ENCODE measurements at regions of chr7 and their contacts with region 1.

Region 1: GRCh38 chr7:56051339-56052191 is at the starts of genes CCT6A and PSPH:
- DNase-seq: peak; percentile 89 to 98
- ATAC-seq: peak; percentile 94 to 95
- H3K4me3 ChIP-seq: peak within 1 kb of the TSS; percentile 96
- H3K27ac ChIP-seq: peak within 1 kb of the TSS; percentile 98
- H3K4me1 ChIP-seq: peaks cover 58% of the 10 kb centered on the region
- CTCF ChIP-seq: no peak
- EP300 ChIP-seq: no peak
- POLR2A ChIP-seq: peak; percentile 96
- RAD21 ChIP-seq: no peak
- polyA plus RNA-seq, gene CCT6A: 444 and 520 TPM in 2 replicates
- polyA plus RNA-seq, gene PSPH: 52.7 and 60.9 TPM in 2 replicates

Region 2: DNA sequence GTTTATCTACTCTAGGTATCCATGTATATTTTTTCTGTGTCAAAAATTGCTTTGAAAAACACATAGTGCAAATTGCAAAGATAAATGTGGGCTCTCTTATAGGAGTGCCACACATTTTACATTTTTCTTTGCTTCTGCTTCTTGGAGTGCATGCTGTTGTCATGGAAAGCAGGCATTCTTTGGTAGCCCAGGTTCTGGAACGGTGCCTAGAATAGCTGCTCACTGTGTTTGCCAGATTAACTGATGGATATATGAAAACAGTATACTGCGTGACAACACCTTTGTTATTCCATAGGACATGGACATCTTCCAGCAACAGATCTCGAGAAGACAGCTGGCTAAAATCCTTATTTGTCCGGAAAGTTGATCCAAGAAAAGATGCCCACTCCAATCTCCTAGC is 73.7 kb before region 1 on chr7:
- CTCF ChIA-PET with region 1: no interaction called
- POLR2A ChIA-PET with region 1: interaction called, 11 read pairs
- DNase-seq: peak in 1 of 2 experiments; percentile 18
- ATAC-seq: peak in 1 of 2 experiments; percentile 35; a peak in 2 of 6 replicates
- H3K4me3 ChIP-seq: no peak overlapping the region
- H3K27ac ChIP-seq: no peak overlapping the region
- H3K4me1 ChIP-seq: peaks cover 7% of the 10 kb centered on the region; the same call in 2 of the 3 replicates
- CTCF ChIP-seq: no peak
- EP300 ChIP-seq: no peak
- POLR2A ChIP-seq: no peak
- RAD21 ChIP-seq: no peak

Region 3: DNA sequence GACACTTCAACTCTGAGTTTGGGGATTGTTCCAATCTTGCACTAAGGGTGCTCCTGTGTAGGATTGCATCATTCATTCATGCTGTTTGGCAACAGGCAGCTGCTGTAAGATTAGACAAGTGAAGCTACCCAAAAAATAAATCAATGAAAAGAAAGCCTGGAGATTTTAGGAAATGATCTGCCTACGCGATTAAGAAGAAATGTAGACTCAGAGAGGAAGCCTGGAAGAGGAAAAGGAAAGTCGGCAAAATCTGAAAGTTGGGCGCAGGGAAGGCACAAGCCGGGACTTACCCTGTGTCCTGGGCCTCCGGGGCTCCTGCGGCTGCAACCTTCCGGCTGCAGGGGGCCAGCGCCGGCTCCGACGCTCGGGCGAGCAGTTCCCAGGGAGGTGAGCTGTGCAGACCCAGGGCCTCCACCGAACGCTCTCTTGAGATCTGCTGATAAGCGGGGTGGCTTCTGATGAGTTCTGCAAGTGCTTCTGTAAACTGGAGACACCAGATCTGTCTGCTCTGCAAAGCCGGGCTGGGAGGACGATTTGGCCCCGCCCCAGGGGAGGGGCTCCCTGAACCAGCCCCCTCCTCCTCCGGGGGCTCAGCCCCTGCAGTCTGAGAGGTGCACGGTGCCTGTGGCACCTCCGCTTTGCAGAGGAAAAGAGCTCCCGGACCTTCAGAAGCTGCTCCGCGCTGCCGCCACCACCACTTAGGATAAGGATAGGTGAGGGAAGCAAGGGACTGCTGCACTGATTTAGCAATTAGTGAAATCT is 17.7 kb before region 1 on chr7:
- CTCF ChIA-PET with region 1: interaction called, 7 read pairs
- POLR2A ChIA-PET with region 1: interaction called, 51 read pairs
- DNase-seq: peak; percentile 75 to 83
- ATAC-seq: peak; percentile 97 to 99
- H3K4me3 ChIP-seq: peak overlapping the region; percentile 57
- H3K27ac ChIP-seq: peak overlapping the region; percentile 78 to 90
- H3K4me1 ChIP-seq: peaks cover 27% of the 10 kb centered on the region; the same call in 2 of the 3 replicates
- CTCF ChIP-seq: 0 out of 3 replicates have a peak, but pooled peaks have one; percentile 6
- EP300 ChIP-seq: no peak
- POLR2A ChIP-seq: peak; percentile 64
- RAD21 ChIP-seq: 0 out of 5 replicates have a peak, but pooled peaks of 1 of the 2 experiments have one; percentile 4

Region 4: DNA sequence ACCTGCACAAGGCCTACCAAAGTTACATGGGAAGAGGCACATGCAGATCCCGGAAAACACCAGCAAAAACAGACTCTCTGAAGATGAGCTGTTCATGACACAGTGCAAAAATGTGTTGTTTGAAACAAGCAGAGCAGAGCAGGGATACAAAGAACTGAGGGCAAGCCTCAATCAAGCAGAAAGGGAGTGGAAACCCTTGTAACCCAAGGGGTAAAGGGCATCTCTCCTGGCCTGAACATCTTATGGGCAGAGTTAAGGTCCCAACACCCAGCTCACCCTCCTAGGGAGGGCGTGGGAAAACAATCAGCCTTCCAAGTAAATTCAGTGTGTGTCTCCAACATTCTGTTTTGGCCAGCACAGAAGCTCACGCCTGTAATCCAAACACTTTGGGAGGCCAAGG is 10.8 kb before region 1 on chr7:
- CTCF ChIA-PET with region 1: interaction called, 6 read pairs
- POLR2A ChIA-PET with region 1: interaction called, 10 read pairs
- DNase-seq: no peak
- ATAC-seq: no peak
- H3K4me3 ChIP-seq: no peak overlapping the region
- H3K27ac ChIP-seq: 0 out of 6 replicates have a peak overlapping the region, but pooled peaks of 1 of the 2 experiments have one; percentile 0
- H3K4me1 ChIP-seq: peaks cover 6% of the 10 kb centered on the region; the same call in 2 of the 3 replicates
- CTCF ChIP-seq: no peak
- EP300 ChIP-seq: no peak
- POLR2A ChIP-seq: no peak
- RAD21 ChIP-seq: no peak

Region 5: GRCh38 chr7:56063882-56064625 is 12.5 kb after region 1 on chr7 and contains the start of gene SUMF2:
- CTCF ChIA-PET with region 1: interaction called, 19 read pairs
- POLR2A ChIA-PET with region 1: interaction called, 114 read pairs
- DNase-seq: peak; percentile 92 to 98
- ATAC-seq: peak; percentile 95 to 96
- H3K4me3 ChIP-seq: peak within 1 kb of the TSS; percentile 81
- H3K27ac ChIP-seq: peak within 1 kb of the TSS; percentile 91 to 94
- H3K4me1 ChIP-seq: peaks cover 54% of the 10 kb centered on the region
- CTCF ChIP-seq: no peak
- EP300 ChIP-seq: 0 out of 5 replicates have a peak, but pooled peaks of 1 of the 2 experiments have one; percentile 21
- POLR2A ChIP-seq: peak; percentile 96
- RAD21 ChIP-seq: no peak
- polyA plus RNA-seq, gene SUMF2: 85.2 TPM in 2 replicates

Region 6: GRCh38 chr7:56106108-56107073 is 54.8 kb after region 1 on chr7 and contains the start of gene CHCHD2:
- CTCF ChIA-PET with region 1: no interaction called
- POLR2A ChIA-PET with region 1: interaction called, 10 read pairs
- DNase-seq: peak; percentile 98 to 99
- ATAC-seq: peak; percentile 100
- H3K4me3 ChIP-seq: peak within 1 kb of the TSS; percentile 82
- H3K27ac ChIP-seq: peak within 1 kb of the TSS; percentile 82 to 94
- H3K4me1 ChIP-seq: peaks cover 5% of the 10 kb centered on the region; the same call in 2 of the 3 replicates
- CTCF ChIP-seq: no peak
- EP300 ChIP-seq: no peak
- POLR2A ChIP-seq: peak; percentile 62
- RAD21 ChIP-seq: no peak
- polyA plus RNA-seq, gene CHCHD2: 400 and 495 TPM in 2 replicates

Region 7: DNA sequence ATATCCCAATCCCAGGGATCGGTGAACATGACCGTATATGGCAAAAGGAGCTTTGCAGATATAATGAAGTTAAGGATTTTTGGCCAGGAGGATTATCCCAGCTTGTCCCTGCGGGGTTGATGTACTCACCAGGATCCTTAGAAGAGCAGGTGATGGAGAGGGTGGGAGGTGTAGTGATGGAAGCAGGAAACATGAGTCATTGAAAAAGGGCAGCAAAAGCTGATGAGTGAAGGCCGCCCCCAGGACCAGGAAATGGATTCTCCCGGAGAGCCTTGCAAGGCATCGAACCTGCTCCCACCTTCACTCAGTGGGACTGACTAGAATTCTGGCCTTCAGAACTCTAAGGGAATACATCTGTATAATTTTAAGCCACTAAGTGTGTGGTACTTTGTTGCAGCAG is 69.9 kb after region 1 on chr7:
- CTCF ChIA-PET with region 1: no interaction called
- POLR2A ChIA-PET with region 1: no interaction called
- DNase-seq: no peak
- ATAC-seq: no peak
- H3K4me3 ChIP-seq: no peak overlapping the region
- H3K27ac ChIP-seq: no peak overlapping the region
- H3K4me1 ChIP-seq: no peaks in the 10 kb centered on the region
- CTCF ChIP-seq: no peak
- EP300 ChIP-seq: no peak
- POLR2A ChIP-seq: no peak
- RAD21 ChIP-seq: no peak